AG04450 (cell line): ENCODE measurements at regions of chr2 and their contacts with region 1.

Region 1: GRCh38 chr2:168346725-168347477 is 99.5 kb upstream of the STK39 start:
- DNase-seq: peak; percentile 20
- H3K4me3 ChIP-seq: peak overlapping the region; percentile 71
- H3K27ac ChIP-seq: no peak overlapping the region
- H3K27me3 ChIP-seq: no peaks in the 10 kb centered on the region
- CTCF ChIP-seq: peak; percentile 79

Region 2: GRCh38 chr2:168583064-168583709 is 236.3 kb after region 1 on chr2:
- CTCF ChIA-PET with region 1: no interaction called
- POLR2A ChIA-PET with region 1: no interaction called
- DNase-seq: no peak
- H3K4me3 ChIP-seq: no peak overlapping the region
- H3K27ac ChIP-seq: peak overlapping the region; percentile 62
- H3K27me3 ChIP-seq: no peaks in the 10 kb centered on the region
- CTCF ChIP-seq: no peak

Region 3: DNA sequence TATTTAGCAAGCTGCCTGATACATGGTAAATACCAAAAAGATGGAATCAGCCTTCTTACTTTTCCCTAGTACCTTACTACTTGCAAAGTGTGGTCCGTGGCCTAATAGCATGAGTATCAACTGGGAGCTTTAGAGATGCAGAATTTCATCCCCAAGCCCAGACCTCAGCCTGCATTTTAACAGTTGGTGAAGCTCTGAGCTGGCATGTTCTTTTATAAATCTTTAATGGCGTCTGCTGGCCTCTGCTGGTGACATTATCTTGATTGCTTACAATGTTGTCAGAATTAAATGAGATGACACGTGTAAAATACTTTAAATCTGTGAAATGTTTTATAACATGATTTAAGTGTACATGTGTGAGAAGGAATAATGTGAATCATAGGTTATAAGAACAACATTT is 340.4 kb after region 1 on chr2:
- CTCF ChIA-PET with region 1: interaction called, 40 read pairs
- POLR2A ChIA-PET with region 1: no interaction called
- DNase-seq: no peak
- H3K4me3 ChIP-seq: no peak overlapping the region
- H3K27ac ChIP-seq: no peak overlapping the region
- H3K27me3 ChIP-seq: no peaks in the 10 kb centered on the region
- CTCF ChIP-seq: no peak

Region 4: DNA sequence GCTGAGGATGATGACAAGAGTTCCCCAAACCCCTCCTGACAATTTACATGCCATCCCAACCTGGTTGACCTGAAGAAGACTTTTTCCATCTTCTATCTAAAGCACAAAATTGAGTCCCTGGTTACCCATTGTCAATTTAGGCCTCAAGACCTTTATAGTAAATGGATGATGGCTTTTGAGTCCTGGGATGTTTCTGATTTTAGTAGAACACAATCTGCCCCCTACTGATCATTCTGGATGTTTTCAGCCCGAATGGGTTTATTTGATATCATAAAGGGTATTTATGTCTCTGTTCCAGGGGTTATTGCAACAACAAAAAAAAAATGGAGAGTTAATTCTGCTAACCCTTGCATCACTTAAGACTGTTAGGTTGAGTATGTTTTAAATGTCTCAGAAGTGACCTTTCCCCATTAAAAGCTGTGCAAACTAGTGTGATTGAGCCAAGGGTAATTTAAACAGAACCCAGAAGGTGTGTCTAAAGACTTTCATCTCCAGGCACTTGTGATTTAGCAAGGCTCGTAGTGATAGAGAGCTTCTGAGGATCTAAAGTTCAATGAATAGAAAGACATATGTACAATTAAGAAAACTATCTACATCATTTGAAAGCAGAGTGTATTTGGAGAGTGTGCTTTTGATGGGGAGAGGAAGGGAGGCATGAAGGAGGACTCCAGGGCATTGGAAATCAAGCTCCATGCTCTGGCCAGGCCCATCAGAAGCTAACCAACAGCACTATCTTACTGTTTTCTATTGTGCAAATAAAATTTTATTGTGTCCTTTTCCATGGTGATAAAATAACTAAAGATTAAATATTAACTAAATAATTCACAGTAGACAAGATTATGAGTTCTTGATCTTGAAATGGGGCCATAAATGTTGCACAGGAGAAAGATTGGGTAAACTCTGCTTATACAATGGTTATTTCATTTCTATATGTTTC is 358.9 kb after region 1 on chr2:
- CTCF ChIA-PET with region 1: interaction called, 100 read pairs
- POLR2A ChIA-PET with region 1: no interaction called
- DNase-seq: no peak
- H3K4me3 ChIP-seq: no peak overlapping the region
- H3K27ac ChIP-seq: no peak overlapping the region
- H3K27me3 ChIP-seq: no peaks in the 10 kb centered on the region
- CTCF ChIP-seq: peak; percentile 58

Region 5: GRCh38 chr2:168758970-168759820 is 412.3 kb after region 1 on chr2:
- CTCF ChIA-PET with region 1: interaction called, 105 read pairs
- POLR2A ChIA-PET with region 1: no interaction called
- DNase-seq: peak; percentile 20
- H3K4me3 ChIP-seq: no peak overlapping the region
- H3K27ac ChIP-seq: no peak overlapping the region
- H3K27me3 ChIP-seq: no peaks in the 10 kb centered on the region
- CTCF ChIP-seq: peak; percentile 71

Region 6: GRCh38 chr2:168773719-168774521 is 427.0 kb after region 1 on chr2:
- CTCF ChIA-PET with region 1: interaction called, 16 read pairs
- POLR2A ChIA-PET with region 1: no interaction called
- DNase-seq: peak; percentile 24
- H3K4me3 ChIP-seq: no peak overlapping the region
- H3K27ac ChIP-seq: no peak overlapping the region
- H3K27me3 ChIP-seq: no peaks in the 10 kb centered on the region
- CTCF ChIP-seq: peak; percentile 91